ENCODE measurements at regions of chr9 and their contacts with region 1.

Region 1: GRCh38 chr9:77800924-77801551 is 152.9 kb upstream of the GNA14 start:
- DNase-seq: no peak
- H3K4me3 Mint-ChIP-seq: no peak overlapping the region
- H3K27ac Mint-ChIP-seq: peak overlapping the region; percentile 82
- H3K4me1 Mint-ChIP-seq: peaks cover 26% of the 10 kb centered on the region
- H3K27me3 Mint-ChIP-seq: no peaks in the 10 kb centered on the region

Region 2: DNA sequence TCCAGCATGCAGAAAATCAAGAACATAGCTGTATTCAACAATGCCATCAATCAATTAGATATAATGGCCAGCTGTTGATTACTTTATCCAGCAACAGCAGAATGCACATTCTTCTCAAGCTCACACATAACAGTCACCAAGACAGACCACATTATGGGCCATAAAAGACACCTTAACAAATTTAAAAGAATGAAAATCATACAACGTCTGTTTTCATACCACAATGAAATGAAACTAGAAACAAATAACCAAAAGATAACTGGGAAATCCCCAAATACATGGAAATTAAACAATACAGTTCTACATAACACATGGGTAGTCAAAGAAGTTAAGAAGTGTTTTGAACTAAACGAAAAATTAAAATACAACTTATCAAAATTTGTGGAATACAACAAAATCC is 22.0 kb before region 1 on chr9:
- intact Hi-C with region 1: loop called (anchors 1 kb)
- DNase-seq: no peak
- H3K4me3 Mint-ChIP-seq: peak overlapping the region; percentile 76
- H3K27ac Mint-ChIP-seq: peak overlapping the region; percentile 85
- H3K4me1 Mint-ChIP-seq: peaks cover 48% of the 10 kb centered on the region
- H3K27me3 Mint-ChIP-seq: no peaks in the 10 kb centered on the region

Region 3: DNA sequence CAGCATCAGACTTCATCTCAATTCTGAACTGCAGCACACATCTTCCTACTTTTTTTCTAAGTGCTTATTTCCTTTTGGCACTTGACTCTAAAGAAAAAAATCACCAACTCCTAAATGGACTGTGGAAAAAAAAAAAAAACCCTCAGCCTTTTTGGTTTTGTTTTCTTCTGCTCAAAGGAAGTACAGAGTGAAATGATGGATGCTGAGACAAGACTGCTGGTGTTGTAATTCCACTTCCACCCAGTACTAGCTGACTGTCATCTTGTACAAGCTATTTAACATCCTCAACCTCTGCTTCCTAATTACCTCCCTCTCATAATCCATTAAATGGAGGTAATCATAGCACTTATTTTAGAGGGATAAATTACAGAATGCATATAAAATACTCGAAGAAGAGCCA is 18.6 kb after region 1 on chr9:
- intact Hi-C with region 1: loop called (anchors 1 kb)
- DNase-seq: no peak
- H3K4me3 Mint-ChIP-seq: no peak overlapping the region
- H3K27ac Mint-ChIP-seq: no peak overlapping the region
- H3K4me1 Mint-ChIP-seq: peaks cover 39% of the 10 kb centered on the region
- H3K27me3 Mint-ChIP-seq: no peaks in the 10 kb centered on the region

Region 4: DNA sequence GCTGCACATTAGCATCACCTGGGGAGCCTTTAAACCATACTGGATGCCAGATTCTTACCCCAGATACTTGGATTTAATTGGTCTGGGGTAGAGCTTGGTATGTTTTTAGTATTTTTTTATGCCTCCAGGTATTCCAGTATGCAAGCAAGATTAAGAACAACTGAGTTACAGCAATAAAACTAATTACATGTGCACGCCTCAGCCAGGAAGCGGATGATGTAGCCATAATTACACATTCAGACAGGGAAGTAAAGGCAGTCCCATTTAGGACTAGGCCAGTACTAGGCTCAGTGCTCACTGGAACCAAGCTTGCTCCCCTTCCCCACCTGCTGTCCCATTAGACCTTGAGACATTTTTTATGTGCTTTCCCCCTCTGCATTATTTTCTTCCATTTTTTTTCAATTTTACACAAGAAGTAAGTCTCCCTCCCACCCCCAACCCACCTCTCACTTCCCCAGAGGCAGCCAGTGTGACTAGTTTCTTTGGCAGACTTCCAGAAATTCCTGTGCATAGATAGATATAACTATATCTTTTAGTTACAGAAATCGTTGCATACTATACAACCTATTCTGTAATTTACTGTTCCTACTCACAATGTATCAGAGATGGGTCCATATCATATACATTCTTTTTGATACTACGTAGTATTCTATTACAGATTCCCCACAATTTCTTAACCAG is 237.7 kb after region 1 on chr9:
- intact Hi-C with region 1: no loop called
- DNase-seq: no peak
- H3K4me3 Mint-ChIP-seq: no peak overlapping the region
- H3K27ac Mint-ChIP-seq: no peak overlapping the region
- H3K4me1 Mint-ChIP-seq: peaks cover 20% of the 10 kb centered on the region
- H3K27me3 Mint-ChIP-seq: no peaks in the 10 kb centered on the region